ENCODE measurements at regions of chr9 and their contacts with region 1.

Region 1: DNA sequence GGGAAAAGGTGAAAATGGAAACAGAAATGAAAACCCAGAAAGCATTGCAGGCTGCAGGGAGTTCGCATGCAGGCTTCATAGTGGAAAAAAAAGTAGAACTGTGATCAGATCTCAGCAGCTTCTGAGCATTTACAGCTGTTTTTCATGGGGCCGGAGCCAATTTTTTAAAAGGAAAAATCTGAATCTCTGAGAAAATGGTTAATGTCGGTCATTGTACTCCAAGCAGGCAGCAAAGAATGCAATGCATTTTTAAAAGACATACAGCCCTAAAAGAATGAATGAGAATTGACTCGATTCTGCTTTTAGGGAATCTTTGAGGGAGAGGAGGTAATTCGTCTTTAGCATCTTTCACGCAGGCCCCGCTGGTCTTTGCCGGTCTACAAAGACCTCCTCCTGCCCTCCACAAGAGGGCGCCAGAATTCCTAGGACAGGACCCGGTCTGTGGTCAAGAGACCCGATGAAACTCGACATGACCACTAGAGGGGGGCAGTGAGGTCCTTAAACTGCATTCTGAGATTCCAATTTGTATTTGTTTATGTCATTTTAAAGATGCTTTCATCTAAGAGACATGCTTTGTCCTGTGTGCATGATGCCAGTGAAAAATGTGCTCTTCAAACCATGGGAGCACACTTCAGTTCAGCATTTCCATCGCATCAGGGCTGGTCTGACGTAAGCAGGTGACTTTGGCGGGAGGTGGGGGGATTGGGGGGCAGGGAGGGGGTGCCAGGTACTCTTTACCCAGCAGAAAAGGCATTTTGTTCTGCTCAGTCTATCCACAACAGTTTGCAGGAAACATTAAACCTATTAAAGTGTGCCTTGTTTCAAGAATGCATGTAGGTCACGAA is 43.7 kb upstream of the TMEM252 start:
- DNase-seq: peak; percentile 69 to 82
- H3K4me3 ChIP-seq: no peak overlapping the region
- H3K27ac ChIP-seq: no peak overlapping the region
- H3K4me1 ChIP-seq: peaks cover 0 to 3% (median 0%) of the 10 kb centered on the region in 4 experiments; a peak in 2 of 7 replicates
- H3K27me3 ChIP-seq: no peaks in the 10 kb centered on the region
- CTCF ChIP-seq: peak; percentile 96 to 100 (median 100)
- EP300 ChIP-seq: no peak
- POLR2A ChIP-seq: no peak
- RAD21 ChIP-seq: peak; percentile 95 to 99

Region 2: DNA sequence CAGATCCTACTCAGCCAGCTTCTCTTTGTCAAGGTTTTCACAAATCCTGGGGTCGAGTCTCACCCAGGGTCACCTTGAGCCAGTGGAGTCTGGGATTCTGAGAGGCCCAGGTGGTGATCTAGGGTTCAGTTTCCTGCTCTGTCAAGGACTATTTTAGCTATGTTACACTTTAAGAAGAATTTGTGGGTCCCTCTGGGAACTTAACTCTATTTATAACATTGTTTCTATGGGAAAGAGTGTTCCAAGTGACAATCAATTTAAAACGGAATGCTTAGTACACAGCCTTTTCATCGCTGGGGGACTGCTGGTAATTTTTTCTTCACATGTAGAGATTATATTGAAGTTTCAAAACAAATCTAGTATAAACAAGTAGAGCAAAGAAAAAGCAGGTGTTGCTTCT is 16.8 kb before region 1 on chr9:
- CTCF ChIA-PET with region 1: interaction called, 21 read pairs
- POLR2A ChIA-PET with region 1: no interaction called
- DNase-seq: no peak
- H3K4me3 ChIP-seq: no peak overlapping the region
- H3K27ac ChIP-seq: no peak overlapping the region
- H3K4me1 ChIP-seq: peaks cover 0 to 5% (median 1%) of the 10 kb centered on the region in 4 experiments; a peak in 4 of 7 replicates
- H3K27me3 ChIP-seq: peaks cover 0 to 3% (median 0%) of the 10 kb centered on the region in 4 experiments; a peak in 2 of 7 replicates
- CTCF ChIP-seq: no peak
- EP300 ChIP-seq: no peak
- POLR2A ChIP-seq: no peak
- RAD21 ChIP-seq: no peak

Region 3: DNA sequence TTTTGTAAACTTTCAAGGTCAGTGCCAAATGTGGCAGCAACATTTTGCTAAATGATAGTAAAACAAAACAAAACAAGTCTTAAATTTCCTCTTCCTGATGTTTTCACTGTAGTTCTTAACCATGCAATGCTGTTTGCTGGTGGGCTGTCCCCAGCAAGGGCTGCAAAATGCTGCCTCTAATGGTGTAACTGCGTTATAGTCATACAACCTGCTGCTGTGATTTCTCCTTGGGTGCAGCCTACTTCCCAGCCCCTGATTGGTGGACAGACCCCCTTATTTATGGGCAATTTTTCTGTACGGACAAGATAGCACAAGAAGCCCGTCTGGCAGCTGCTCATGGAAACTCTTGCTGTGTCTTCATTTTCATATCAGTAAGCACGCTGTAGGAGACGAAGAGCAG is 94.0 kb after region 1 on chr9:
- CTCF ChIA-PET with region 1: interaction called, 26 read pairs
- POLR2A ChIA-PET with region 1: no interaction called
- DNase-seq: no peak
- H3K4me3 ChIP-seq: no peak overlapping the region
- H3K27ac ChIP-seq: no peak overlapping the region
- H3K4me1 ChIP-seq: no peaks in the 10 kb centered on the region
- H3K27me3 ChIP-seq: no peaks in the 10 kb centered on the region; a peak in 1 of 7 replicates
- CTCF ChIP-seq: peak; percentile 52 to 77 (median 67)
- EP300 ChIP-seq: no peak
- POLR2A ChIP-seq: no peak
- RAD21 ChIP-seq: peak; percentile 48 to 64

Region 4: DNA sequence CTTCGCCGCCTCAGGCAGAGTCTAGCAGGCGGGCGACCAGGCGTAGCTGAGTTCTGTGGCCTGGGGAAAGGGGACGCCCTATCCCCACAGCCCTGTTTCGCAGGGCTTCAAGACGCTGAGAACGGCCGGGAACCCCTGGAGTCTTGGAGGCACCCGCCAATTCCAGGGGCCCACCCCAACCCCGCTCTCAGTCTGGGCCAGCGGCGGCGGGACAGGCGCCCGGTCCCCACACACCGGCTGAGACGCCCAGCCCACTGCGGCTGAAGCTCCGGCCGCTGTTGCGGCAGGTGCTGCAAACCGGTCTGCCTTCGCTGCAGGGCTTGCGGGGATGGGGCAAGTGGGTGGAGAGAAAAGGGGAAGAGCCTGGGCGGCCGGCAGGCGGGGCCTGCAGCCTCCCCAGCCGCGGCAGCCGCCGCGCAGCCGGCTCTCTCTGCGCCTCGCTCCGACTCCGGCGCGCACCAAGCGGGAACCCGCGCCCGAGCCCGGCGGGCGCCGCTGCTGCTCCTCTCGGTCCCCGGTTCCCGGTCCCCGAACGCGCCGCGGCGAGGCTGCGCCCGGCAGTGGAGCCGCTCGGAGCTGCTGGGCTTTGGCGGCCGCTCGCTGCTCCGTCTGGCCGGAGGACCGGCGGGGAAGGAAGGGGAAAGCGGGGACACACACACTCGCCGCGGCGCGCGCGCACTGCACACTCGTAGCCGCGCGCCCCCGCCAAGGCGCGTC is 120.6 kb after region 1 on chr9 and contains the start of gene PIP5K1B:
- CTCF ChIA-PET with region 1: interaction called, 13 read pairs
- POLR2A ChIA-PET with region 1: no interaction called
- DNase-seq: peak in 1 of 2 experiments; percentile 82
- H3K4me3 ChIP-seq: peak within 1 kb of the TSS; percentile 46 to 95 (median 83)
- H3K27ac ChIP-seq: no peak within 1 kb of the TSS
- H3K4me1 ChIP-seq: peaks cover 3 to 11% (median 4%) of the 10 kb centered on the region in 4 experiments; a peak in 6 of 7 replicates
- H3K27me3 ChIP-seq: peaks cover 7 to 26% (median 23%) of the 10 kb centered on the region in 4 experiments
- CTCF ChIP-seq: no peak
- EP300 ChIP-seq: no peak
- POLR2A ChIP-seq: 0 out of 3 replicates have a peak, but pooled peaks of 1 of the 2 experiments have one; percentile 34
- RAD21 ChIP-seq: 0 out of 4 replicates have a peak, but pooled peaks of 1 of the 2 experiments have one; percentile 6
- total RNA-seq, gene PIP5K1B: 6.1 and 7.7 TPM in 2 replicates

Region 5: DNA sequence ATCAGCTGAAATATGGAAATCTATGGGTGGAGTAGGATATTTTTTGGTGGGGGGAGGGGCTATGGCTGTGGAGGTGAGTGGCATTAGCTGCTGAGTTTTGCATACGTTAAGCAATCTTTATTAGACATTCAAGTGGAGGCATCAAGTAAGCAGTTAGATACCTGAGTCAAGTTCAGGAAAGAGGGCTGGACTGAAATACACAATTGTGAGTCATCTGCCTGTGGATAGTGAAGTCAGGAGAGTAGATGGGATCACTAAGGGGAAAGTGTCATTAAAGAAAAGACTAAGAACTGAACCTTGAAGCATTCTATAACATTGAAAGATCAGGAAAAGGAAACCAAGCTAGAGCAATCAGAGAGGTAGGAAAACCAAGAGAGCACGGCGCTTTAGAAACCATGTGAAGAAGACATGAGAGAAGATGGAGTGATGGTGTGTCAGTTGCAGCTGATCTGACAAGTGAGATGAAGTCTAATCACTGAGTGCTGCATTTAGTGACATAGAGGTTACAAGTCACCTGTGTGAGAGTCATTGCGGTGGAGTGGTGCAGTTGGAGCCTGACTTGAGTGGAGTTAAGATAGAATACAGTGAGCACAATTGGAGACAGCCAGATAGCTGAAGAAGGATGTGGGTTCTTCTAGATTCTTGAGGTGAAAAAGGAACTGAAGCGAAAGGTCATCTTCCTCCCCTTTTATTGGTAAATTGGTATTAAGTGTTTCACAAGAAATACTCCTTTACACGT is 209.4 kb after region 1 on chr9:
- CTCF ChIA-PET with region 1: no interaction called
- POLR2A ChIA-PET with region 1: no interaction called
- DNase-seq: no peak
- H3K4me3 ChIP-seq: no peak overlapping the region
- H3K27ac ChIP-seq: no peak overlapping the region
- H3K4me1 ChIP-seq: peaks cover 0 to 3% (median 0%) of the 10 kb centered on the region in 4 experiments; a peak in 2 of 7 replicates
- H3K27me3 ChIP-seq: no peaks in the 10 kb centered on the region
- CTCF ChIP-seq: no peak
- EP300 ChIP-seq: no peak
- POLR2A ChIP-seq: no peak
- RAD21 ChIP-seq: no peak

Region 6: GRCh38 chr9:69027355-69028096 is 443.1 kb after region 1 on chr9:
- CTCF ChIA-PET with region 1: interaction called, 15 read pairs
- POLR2A ChIA-PET with region 1: no interaction called
- DNase-seq: no peak
- H3K4me3 ChIP-seq: no peak overlapping the region
- H3K27ac ChIP-seq: no peak overlapping the region
- H3K4me1 ChIP-seq: peaks cover 0 to 5% (median 0%) of the 10 kb centered on the region in 4 experiments; a peak in 1 of 7 replicates
- H3K27me3 ChIP-seq: no peaks in the 10 kb centered on the region
- CTCF ChIP-seq: peak; percentile 22 to 85 (median 73)
- EP300 ChIP-seq: no peak
- POLR2A ChIP-seq: no peak
- RAD21 ChIP-seq: peak; percentile 84 to 91

Measured in H1 (cell line).